Ascending aorta (tissue), 2 donors: ENCODE measurements at regions of chr7 and their contacts with region 1.

Region 1: GRCh38 chr7:94289071-94289470 is 105.6 kb upstream of the COL1A2 start:
- DNase-seq: peak in 1 of 2 donors; percentile 80
- H3K4me3 ChIP-seq: no peak overlapping the region
- H3K27ac ChIP-seq: no peak overlapping the region
- H3K4me1 ChIP-seq: no peaks in the 10 kb centered on the region
- H3K27me3 ChIP-seq: no peaks in the 10 kb centered on the region
- CTCF ChIP-seq: peak; percentile 83 to 97 (median 97)

Region 2: DNA sequence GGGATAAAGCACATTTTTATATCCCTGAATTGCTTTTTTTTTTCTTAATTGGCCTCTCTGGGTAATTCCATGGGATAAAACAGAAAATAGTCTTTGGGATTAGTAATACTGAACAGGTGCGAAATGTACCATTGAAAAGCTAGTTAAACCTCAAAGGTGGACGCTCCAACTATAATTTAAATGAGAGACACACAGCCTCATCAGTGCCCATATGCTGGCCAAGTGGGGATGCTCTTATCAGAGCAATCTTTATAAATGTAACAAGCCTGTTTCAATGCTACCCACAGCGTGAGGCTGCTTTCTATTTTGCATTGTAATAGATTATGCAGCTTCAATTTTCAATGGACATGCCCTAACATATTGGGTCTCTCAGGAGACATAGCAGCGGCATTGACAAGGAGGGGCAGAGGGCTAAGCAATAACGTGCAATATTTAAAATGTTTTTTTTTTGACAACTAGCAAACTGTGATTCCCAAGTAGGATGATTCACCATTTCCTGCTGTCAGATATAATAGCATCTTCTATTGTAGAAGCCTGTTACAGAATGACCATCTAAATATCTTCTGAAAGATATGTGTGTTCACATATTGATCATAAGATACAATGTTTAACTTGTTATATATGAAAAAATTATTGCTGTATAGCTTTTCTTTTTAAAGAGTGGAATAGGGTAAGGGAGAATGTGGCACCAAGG is 193.6 kb before region 1 on chr7:
- intact Hi-C with region 1: no loop called
- DNase-seq: no peak
- H3K4me3 ChIP-seq: no peak overlapping the region
- H3K27ac ChIP-seq: no peak overlapping the region
- H3K4me1 ChIP-seq: no peaks in the 10 kb centered on the region
- H3K27me3 ChIP-seq: no peaks in the 10 kb centered on the region
- CTCF ChIP-seq: no peak

Region 3: GRCh38 chr7:94338921-94339371 is 49.9 kb after region 1 on chr7:
- intact Hi-C with region 1: no loop called
- DNase-seq: no peak
- H3K4me3 ChIP-seq: no peak overlapping the region
- H3K27ac ChIP-seq: no peak overlapping the region
- H3K4me1 ChIP-seq: peaks cover 0 to 4% of the 10 kb centered on the region in 2 donors
- H3K27me3 ChIP-seq: no peaks in the 10 kb centered on the region
- CTCF ChIP-seq: no peak

Region 4: GRCh38 chr7:94436018-94436604 is 147.0 kb after region 1 on chr7:
- intact Hi-C with region 1: loop called (anchors 1 kb)
- DNase-seq: peak in 1 of 2 donors; percentile 82
- H3K4me3 ChIP-seq: no peak overlapping the region
- H3K27ac ChIP-seq: no peak overlapping the region
- H3K4me1 ChIP-seq: no peaks in the 10 kb centered on the region
- H3K27me3 ChIP-seq: no peaks in the 10 kb centered on the region
- CTCF ChIP-seq: peak; percentile 65 to 77 (median 74)

Region 5: DNA sequence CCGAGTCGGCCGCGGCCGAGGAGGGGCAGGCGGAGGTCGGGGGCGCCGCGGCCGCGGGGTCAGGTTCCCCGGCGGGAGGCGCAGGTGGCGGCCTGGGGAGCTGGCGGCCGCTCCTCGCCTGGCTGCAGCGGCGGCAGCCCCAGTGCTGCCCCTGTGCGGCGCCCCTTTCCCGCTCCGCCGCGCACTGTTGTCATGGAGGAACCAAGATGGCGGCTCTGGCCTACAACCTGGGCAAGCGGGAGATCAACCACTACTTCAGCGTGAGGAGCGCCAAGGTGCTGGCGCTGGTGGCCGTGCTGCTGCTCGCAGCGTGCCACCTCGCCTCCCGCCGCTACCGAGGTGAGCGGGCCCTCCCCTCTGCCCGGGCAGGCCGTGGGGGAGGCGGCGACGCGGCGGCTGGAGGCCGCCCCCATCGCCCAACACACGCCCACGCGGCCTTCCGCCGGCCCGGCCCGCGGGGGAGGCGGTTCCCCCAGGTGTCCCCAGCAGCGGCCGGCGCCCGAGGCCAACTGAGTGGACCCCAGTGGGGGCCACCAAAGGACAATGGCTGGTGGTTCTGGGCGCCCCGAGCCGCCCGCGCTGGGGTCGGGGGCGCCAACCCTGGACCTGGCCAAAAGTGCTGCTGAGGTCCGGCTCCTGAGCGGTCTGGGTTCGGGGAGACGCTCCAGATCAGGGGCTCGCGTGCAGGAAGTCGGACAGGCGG is 221.0 kb after region 1 on chr7:
- intact Hi-C with region 1: loop called (anchors 5 kb)
- DNase-seq: peak in 1 of 2 donors; percentile 74
- H3K4me3 ChIP-seq: peak overlapping the region; percentile 87 to 98
- H3K27ac ChIP-seq: peak overlapping the region; percentile 87 to 96
- H3K4me1 ChIP-seq: peaks cover 0 to 3% of the 10 kb centered on the region in 2 donors
- H3K27me3 ChIP-seq: no peaks in the 10 kb centered on the region
- CTCF ChIP-seq: peak in 2 of 3 experiments; percentile 8 to 22